ENCODE measurements at regions of chr7 and their contacts with region 1.

Region 1: GRCh38 chr7:77619314-77619713 is 76.9 kb upstream of the RSBN1L start:
- DNase-seq: no peak
- ATAC-seq: no peak
- H3K4me3 ChIP-seq: no peak overlapping the region
- H3K4me3 Mint-ChIP-seq: no peak overlapping the region
- H3K27ac ChIP-seq: no peak overlapping the region
- H3K27ac Mint-ChIP-seq: no peak overlapping the region
- H3K4me1 ChIP-seq: no peaks in the 10 kb centered on the region
- H3K4me1 Mint-ChIP-seq: peaks cover 0 to 5% (median 0%) of the 10 kb centered on the region in 7 donors
- H3K27me3 ChIP-seq: no peaks in the 10 kb centered on the region
- H3K27me3 Mint-ChIP-seq: no peaks in the 10 kb centered on the region

Region 2: DNA sequence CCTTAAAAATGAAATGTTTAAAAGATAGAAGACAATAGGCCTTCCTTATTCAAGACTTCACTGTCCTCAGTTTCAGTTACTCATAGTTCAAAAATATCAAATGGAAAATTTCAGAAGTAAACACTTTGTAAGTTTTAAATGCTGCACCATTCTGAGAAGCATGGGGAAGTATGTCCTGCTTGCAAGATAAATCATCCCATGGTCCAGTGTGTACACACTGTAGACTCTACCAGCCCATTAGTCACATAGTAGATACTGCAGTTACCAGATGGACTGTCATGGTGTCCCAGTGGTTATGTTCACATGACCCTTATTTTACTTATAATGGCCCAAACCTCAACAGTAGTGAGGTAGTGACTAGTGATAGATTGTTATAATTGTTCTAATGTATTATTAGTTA is 12.8 kb before region 1 on chr7:
- CTCF ChIA-PET with region 1: no interaction called
- POLR2A ChIA-PET with region 1: no interaction called
- intact Hi-C with region 1: loop called in 1 of 2 experiments (anchors 1 kb)
- DNase-seq: no peak
- ATAC-seq: no peak
- H3K4me3 ChIP-seq: no peak overlapping the region
- H3K4me3 Mint-ChIP-seq: no peak overlapping the region
- H3K27ac ChIP-seq: no peak overlapping the region
- H3K27ac Mint-ChIP-seq: no peak overlapping the region
- H3K4me1 ChIP-seq: no peaks in the 10 kb centered on the region
- H3K4me1 Mint-ChIP-seq: peaks cover 0 to under 1% (median 0%) of the 10 kb centered on the region in 7 donors
- H3K27me3 ChIP-seq: no peaks in the 10 kb centered on the region
- H3K27me3 Mint-ChIP-seq: no peaks in the 10 kb centered on the region